Heart left ventricle (tissue), 16 donors: ENCODE measurements at regions of chr12 and their contacts with region 1.

Region 1: DNA sequence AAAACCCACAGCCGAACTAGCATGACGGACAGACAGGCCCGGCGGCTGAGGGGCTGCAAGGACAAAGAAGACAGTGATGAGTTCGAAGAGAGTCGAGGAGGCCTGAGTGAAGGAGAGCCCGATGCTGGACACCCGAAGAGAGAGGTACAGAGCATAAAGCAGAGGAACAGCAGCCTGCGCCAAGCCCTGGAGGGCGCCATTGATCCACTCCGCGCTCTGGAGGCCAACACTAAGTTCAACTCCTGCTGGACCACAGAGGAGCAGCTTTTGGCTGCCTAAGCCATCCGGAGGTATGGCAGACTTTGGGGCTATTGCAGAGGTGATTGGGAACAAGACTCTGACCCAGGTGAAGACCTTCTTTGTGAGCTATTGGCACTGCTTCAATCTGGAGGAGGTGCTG is 7.8 kb upstream of the PLXNC1 start:
- DNase-seq: peak in 1 of 5 donors; percentile 30
- ATAC-seq: peak in 1 of 4 donors; percentile 44
- H3K4me3 ChIP-seq: no peak overlapping the region
- H3K27ac ChIP-seq: no peak overlapping the region
- H3K4me1 ChIP-seq: peaks cover 0 to 3% (median 0%) of the 10 kb centered on the region in 12 donors
- H3K27me3 ChIP-seq: no peaks in the 10 kb centered on the region
- CTCF ChIP-seq: peak in 3 of 12 donors; percentile 7 to 23 (median 11)
- POLR2A ChIP-seq: no peak

Region 2: DNA sequence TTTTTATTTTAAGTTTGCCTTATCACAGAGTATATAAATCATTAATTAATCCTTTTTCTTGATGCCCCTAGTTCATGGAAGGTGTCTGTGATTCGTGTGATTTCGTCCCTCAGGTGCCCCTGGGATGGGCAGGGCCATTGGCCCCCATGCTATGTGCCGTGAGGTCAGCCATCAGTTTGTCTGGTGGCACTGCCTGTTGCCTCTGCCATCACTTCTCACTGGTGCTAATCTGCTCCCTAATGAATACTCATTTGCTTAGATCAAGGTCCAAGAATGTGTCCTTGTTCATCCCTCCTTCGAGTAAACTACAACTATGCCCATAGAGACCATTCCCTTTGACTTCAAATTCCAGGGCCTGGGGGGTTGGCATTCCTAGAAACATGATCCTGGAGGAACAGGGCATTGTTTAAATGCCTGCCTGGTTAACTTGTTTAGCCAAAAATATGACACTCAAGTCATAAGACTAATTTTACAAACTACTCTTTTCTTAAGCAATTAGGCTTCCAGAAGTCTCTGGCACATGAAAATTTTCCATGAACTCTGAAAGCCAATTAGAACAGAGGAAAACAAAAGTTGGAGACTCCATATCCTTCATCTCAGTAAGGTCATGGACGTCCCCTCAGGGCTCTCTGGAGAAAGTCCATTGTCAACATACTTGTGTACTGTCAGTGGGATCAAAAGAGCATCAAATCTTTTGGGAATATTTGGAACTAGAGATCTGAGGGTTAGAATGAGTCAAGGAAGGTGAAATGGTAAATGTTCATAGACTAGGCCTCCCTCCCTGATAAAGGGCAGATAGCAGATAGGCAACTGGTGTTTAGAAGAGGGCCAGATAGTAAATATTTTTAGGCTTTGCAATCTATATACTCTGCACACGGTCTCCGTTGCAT is 83.0 kb before region 1 on chr12:
- intact Hi-C with region 1: no loop called
- DNase-seq: peak in 1 of 5 donors; percentile 41
- ATAC-seq: peak; percentile 62 to 83 (median 74)
- H3K4me3 ChIP-seq: no peak overlapping the region
- H3K27ac ChIP-seq: peak overlapping the region in 7 of 12 donors; percentile 3 to 63 (median 31)
- H3K4me1 ChIP-seq: peaks cover 0 to 25% (median 6%) of the 10 kb centered on the region in 12 donors
- H3K27me3 ChIP-seq: no peaks in the 10 kb centered on the region
- CTCF ChIP-seq: no peak
- POLR2A ChIP-seq: no peak

Region 3: GRCh38 chr12:94218233-94218632 is 77.7 kb after region 1 on chr12:
- intact Hi-C with region 1: no loop called
- DNase-seq: no peak
- ATAC-seq: no peak
- H3K4me3 ChIP-seq: no peak overlapping the region
- H3K27ac ChIP-seq: no peak overlapping the region
- H3K4me1 ChIP-seq: no peaks in the 10 kb centered on the region
- H3K27me3 ChIP-seq: no peaks in the 10 kb centered on the region
- CTCF ChIP-seq: no peak
- POLR2A ChIP-seq: no peak

Region 4: GRCh38 chr12:94435511-94435927 is 295.0 kb after region 1 on chr12:
- intact Hi-C with region 1: loop called in 8 of 10 experiments (anchors 2 to 10 kb)
- DNase-seq: no peak
- ATAC-seq: peak in 3 of 4 donors; percentile 33 to 42 (median 39)
- H3K4me3 ChIP-seq: peak overlapping the region in 2 of 12 donors; percentile 11 to 18
- H3K27ac ChIP-seq: no peak overlapping the region
- H3K4me1 ChIP-seq: peaks cover 0 to 16% (median 6%) of the 10 kb centered on the region in 12 donors
- H3K27me3 ChIP-seq: no peaks in the 10 kb centered on the region
- CTCF ChIP-seq: no peak
- POLR2A ChIP-seq: no peak